Heart right ventricle (tissue), 16 donors: ENCODE measurements at regions of chr10 and their contacts with region 1.

Region 1: DNA sequence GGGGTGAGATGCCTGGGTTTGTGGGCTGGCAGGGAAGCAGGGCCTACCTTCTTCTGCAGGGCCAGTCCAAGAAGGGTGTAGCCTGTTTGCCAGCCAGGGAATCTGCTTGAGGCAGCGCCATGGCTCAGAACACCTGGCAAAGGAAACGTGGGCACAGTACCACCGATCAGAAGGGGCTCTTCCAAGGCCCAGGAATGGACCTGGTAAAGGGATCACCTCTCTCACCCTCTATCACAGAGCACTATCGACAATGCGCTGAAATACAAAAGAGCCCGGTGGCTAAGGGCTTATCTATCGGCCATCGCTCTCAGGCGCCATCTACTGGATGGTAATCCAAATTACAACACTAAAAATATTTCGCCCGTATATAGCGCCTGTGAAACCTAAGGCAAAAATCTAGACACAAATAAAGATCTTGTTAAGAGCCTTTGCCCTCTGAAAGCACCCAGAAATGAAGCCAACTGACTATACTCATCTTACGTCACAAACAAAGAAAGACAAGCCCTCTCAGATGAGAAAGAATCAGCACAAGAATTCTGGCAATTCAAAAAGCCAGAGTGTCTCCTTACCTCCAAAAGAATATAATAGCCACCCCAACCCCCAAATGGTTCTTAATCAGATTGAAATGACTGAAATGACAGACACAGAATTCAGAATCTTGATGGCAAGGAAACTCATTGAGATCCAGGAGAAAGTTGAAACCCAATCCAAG is 217.8 kb upstream of the HPS1 start:
- DNase-seq: no peak
- ATAC-seq: no peak
- H3K4me3 ChIP-seq: no peak overlapping the region
- H3K27ac ChIP-seq: no peak overlapping the region
- H3K4me1 ChIP-seq: no peaks in the 10 kb centered on the region
- H3K27me3 ChIP-seq: peaks cover 0 to 4% (median 0%) of the 10 kb centered on the region in 7 donors
- CTCF ChIP-seq: peak in 8 of 9 donors; percentile 7 to 65 (median 48)

Region 2: GRCh38 chr10:98486421-98486820 is 178.1 kb before region 1 on chr10:
- intact Hi-C with region 1: loop called in 1 of 10 experiments (anchors 10 kb)
- DNase-seq: no peak
- ATAC-seq: peak in 1 of 8 donors; percentile 29
- H3K4me3 ChIP-seq: no peak overlapping the region
- H3K27ac ChIP-seq: no peak overlapping the region
- H3K4me1 ChIP-seq: no peaks in the 10 kb centered on the region
- H3K27me3 ChIP-seq: peaks cover 0 to 3% (median 0%) of the 10 kb centered on the region in 7 donors
- CTCF ChIP-seq: no peak

Region 3: DNA sequence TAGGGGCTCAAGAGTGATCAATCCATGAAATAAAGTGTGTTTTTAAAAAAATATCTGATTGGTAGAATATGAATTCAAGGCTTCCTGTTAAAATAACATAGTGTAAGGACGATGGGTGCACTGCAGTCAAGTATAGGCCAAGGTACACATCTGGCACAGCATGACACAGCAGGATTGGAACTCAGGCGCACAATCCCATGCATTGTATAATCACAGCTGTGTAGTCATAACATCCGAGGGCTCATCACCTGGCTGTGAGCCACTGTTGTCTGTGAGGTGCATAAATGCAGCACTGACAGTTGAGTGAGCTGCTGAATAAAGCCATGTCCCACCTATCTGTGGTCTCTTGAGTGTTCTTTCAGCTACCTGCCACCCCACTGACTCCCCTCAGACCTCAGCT is 75.5 kb before region 1 on chr10:
- intact Hi-C with region 1: no loop called
- DNase-seq: no peak
- ATAC-seq: no peak
- H3K4me3 ChIP-seq: no peak overlapping the region
- H3K27ac ChIP-seq: no peak overlapping the region
- H3K4me1 ChIP-seq: peaks cover 0 to 4% (median 0%) of the 10 kb centered on the region in 9 donors
- H3K27me3 ChIP-seq: no peaks in the 10 kb centered on the region
- CTCF ChIP-seq: no peak

Region 4: GRCh38 chr10:98758463-98758862 is 94.0 kb after region 1 on chr10:
- intact Hi-C with region 1: loop called in 1 of 10 experiments (anchors 5 kb)
- DNase-seq: no peak
- ATAC-seq: no peak
- H3K4me3 ChIP-seq: no peak overlapping the region
- H3K27ac ChIP-seq: no peak overlapping the region
- H3K4me1 ChIP-seq: no peaks in the 10 kb centered on the region
- H3K27me3 ChIP-seq: no peaks in the 10 kb centered on the region
- CTCF ChIP-seq: no peak